Activated T-helper 2 cell treated with anti-CD3 and anti-CD28 coated beads, Interferon-gamma antibody, Interleukin-2, Interleukin-4, amounts not matched to agents 10 μg/mL and 5 μg/mL and 100 μg/mL, durations not matched to agents 14 hours and 24 hours and 36 hours (primary cell): ENCODE measurements at regions of chr2 and their contacts with region 1.

Region 1: GRCh38 chr2:200944467-200945394 is 18.7 kb downstream of the ORC2 start:
- DNase-seq: no peak
- H3K4me3 Mint-ChIP-seq: no peak overlapping the region
- H3K27ac Mint-ChIP-seq: peak overlapping the region; percentile 87
- H3K4me1 Mint-ChIP-seq: peaks cover 25% of the 10 kb centered on the region
- H3K27me3 Mint-ChIP-seq: no peaks in the 10 kb centered on the region

Region 2: DNA sequence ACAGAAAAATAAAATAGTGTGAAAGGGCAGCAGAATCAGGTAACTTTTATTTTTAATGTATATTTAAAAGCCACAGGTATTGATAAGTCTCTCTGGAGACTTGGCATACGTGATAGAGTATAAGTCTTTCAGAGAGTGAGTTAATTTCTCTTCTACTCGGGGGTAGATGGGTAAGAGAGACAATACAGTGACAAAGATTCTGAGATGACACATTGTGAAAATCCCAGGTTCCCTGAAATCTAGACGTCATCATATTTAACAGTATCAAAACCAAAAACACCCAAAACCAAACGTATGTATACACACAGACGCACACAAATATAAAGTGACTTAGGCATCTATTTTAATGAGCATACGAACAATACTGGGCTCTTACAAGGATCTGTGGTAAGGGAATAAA is 22.3 kb before region 1 on chr2:
- intact Hi-C with region 1: loop called (anchors 2 kb)
- DNase-seq: no peak
- H3K4me3 Mint-ChIP-seq: no peak overlapping the region
- H3K27ac Mint-ChIP-seq: peak overlapping the region; percentile 83
- H3K4me1 Mint-ChIP-seq: peaks cover 11% of the 10 kb centered on the region
- H3K27me3 Mint-ChIP-seq: no peaks in the 10 kb centered on the region